AG04450 (cell line): ENCODE measurements at regions of chr2 and their contacts with region 1.

Region 1: GRCh38 chr2:96208143-96209010 is at the start of gene STARD7:
- DNase-seq: peak; percentile 94
- H3K4me3 ChIP-seq: peak within 1 kb of the TSS; percentile 88
- H3K27ac ChIP-seq: peak within 1 kb of the TSS; percentile 87
- H3K27me3 ChIP-seq: no peaks in the 10 kb centered on the region
- CTCF ChIP-seq: no peak
- polyA plus RNA-seq, gene STARD7: 84.2 and 106 TPM in 2 replicates

Region 2: DNA sequence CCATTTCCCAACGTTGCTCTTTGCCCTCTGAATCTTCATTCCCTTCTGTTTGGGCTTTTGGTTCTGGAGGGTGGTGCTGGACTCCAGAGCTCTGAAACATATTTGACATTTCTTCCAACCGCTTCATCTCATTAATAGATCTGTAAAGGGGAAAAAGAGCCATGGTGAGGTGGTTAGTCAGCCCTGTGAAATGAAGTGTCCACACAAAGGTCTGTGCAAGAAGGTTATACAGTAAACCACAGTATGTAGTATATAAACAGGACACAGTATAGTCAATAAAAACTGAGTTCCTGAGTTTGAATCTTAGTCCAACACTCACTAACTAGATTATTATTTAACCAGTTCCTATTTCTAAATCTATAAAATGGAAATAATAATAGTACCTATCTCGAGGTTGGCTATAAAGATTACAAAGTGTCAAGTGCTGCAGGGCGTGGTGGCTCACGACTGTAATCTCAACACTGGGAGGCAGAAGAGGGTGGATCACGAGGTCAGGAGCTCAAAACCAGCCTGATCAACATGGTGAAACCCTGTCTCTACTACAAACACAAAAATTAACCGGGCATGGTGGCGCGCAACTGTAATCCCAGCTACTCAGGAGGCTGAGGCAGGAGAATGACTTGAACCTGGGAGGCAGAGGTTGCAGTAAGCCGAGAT is 12.8 kb before region 1 on chr2:
- CTCF ChIA-PET with region 1: no interaction called
- POLR2A ChIA-PET with region 1: interaction called, 18 read pairs
- DNase-seq: peak; percentile 73
- H3K4me3 ChIP-seq: no peak overlapping the region
- H3K27ac ChIP-seq: peak overlapping the region; percentile 63
- H3K27me3 ChIP-seq: no peaks in the 10 kb centered on the region
- CTCF ChIP-seq: no peak

Region 3: GRCh38 chr2:96315400-96316071 is 107.2 kb after region 1 on chr2:
- CTCF ChIA-PET with region 1: no interaction called
- POLR2A ChIA-PET with region 1: no interaction called
- DNase-seq: no peak
- H3K4me3 ChIP-seq: no peak overlapping the region
- H3K27ac ChIP-seq: peak overlapping the region; percentile 21
- H3K27me3 ChIP-seq: no peaks in the 10 kb centered on the region
- CTCF ChIP-seq: no peak